CD8-positive, alpha-beta T cell (primary cell): ENCODE measurements at regions of chr16 and their contacts with region 1.

Region 1: GRCh38 chr16:67159593-67160406 is at the starts of genes FBXL8 and TRADD:
- DNase-seq: peak; percentile 53 to 90 (median 76)
- ATAC-seq: peak; percentile 69
- H3K4me3 ChIP-seq: peak within 1 kb of the TSS; percentile 94 to 97
- H3K4me3 Mint-ChIP-seq: peak within 1 kb of the TSS; percentile 89
- H3K27ac ChIP-seq: peak within 1 kb of the TSS; percentile 74 to 93
- H3K27ac Mint-ChIP-seq: peak within 1 kb of the TSS; percentile 95
- H3K4me1 ChIP-seq: peaks cover 72% of the 10 kb centered on the region
- H3K4me1 Mint-ChIP-seq: peaks cover 60% of the 10 kb centered on the region
- H3K27me3 ChIP-seq: peaks cover 13 to 33% of the 10 kb centered on the region in 2 experiments
- H3K27me3 Mint-ChIP-seq: peaks cover 20% of the 10 kb centered on the region
- CTCF ChIP-seq: peak; percentile 60
- total RNA-seq, gene FBXL8: 4.4 to 6.4 TPM
- total RNA-seq, gene TRADD: 15.5 to 17.1 TPM

Region 2: DNA sequence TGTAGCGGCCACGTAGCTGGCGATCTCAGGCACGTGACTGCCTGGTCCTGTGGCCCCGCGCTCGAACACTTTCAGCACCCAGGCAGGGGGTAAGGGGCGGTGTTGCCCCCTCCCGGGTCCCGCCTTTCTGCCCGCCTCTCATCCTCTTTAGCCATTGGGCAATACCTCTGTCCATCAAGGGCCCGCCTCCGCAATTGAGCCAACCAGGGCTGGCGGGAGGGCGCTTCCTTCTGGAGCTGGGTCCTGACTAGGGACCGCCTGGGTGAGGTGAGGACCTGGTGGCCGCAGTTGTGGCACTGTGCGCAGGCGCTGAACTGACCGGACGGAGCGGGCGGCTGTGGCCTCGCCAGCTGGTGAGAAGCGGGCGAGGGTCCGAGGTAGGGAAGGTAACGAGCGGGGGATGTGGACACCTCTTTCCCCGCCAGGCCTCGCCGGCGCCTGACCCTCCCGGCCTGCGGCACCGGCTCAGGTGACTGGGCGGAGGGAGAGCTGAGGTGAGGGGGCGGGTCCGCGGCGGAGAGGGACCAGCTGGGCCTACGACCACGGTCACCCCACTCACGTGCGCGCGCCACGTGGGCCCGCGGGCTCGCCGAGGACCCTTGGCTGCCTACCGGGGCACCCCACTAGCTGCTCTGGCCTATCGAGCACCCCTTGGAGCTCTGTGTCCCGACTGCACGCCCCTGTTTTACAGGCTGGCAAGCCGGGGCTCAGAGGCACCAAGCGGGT is 279.3 kb before region 1 on chr16 and contains the start of gene PDP2:
- CTCF ChIA-PET with region 1: no interaction called
- POLR2A ChIA-PET with region 1: no interaction called
- intact Hi-C with region 1: loop called in 1 of 2 experiments (anchors 1 kb)
- DNase-seq: peak; percentile 75 to 95 (median 89)
- ATAC-seq: peak; percentile 97
- H3K4me3 ChIP-seq: peak within 1 kb of the TSS; percentile 81 to 95
- H3K4me3 Mint-ChIP-seq: peak within 1 kb of the TSS; percentile 99
- H3K27ac ChIP-seq: peak within 1 kb of the TSS; percentile 47 to 54
- H3K27ac Mint-ChIP-seq: peak within 1 kb of the TSS; percentile 94
- H3K4me1 ChIP-seq: peaks cover 7% of the 10 kb centered on the region
- H3K4me1 Mint-ChIP-seq: peaks cover 27% of the 10 kb centered on the region
- H3K27me3 ChIP-seq: no peaks in the 10 kb centered on the region
- H3K27me3 Mint-ChIP-seq: no peaks in the 10 kb centered on the region
- CTCF ChIP-seq: no peak
- total RNA-seq, gene PDP2: 5.1 to 6.1 TPM

Region 3: GRCh38 chr16:66977341-66978113 is 182.3 kb before region 1 on chr16:
- CTCF ChIA-PET with region 1: interaction called, 79 read pairs
- POLR2A ChIA-PET with region 1: interaction called, 3 read pairs
- intact Hi-C with region 1: loop called (anchors 1 kb)
- DNase-seq: peak; percentile 71 to 95 (median 88)
- ATAC-seq: peak; percentile 99
- H3K4me3 ChIP-seq: no peak overlapping the region
- H3K4me3 Mint-ChIP-seq: no peak overlapping the region
- H3K27ac ChIP-seq: no peak overlapping the region
- H3K27ac Mint-ChIP-seq: no peak overlapping the region
- H3K4me1 ChIP-seq: no peaks in the 10 kb centered on the region
- H3K4me1 Mint-ChIP-seq: peaks cover 11% of the 10 kb centered on the region
- H3K27me3 ChIP-seq: no peaks in the 10 kb centered on the region
- H3K27me3 Mint-ChIP-seq: no peaks in the 10 kb centered on the region
- CTCF ChIP-seq: peak; percentile 92

Region 4: GRCh38 chr16:67028555-67029248 is 131.1 kb before region 1 on chr16 and contains the start of gene CBFB:
- CTCF ChIA-PET with region 1: interaction called, 7 read pairs
- POLR2A ChIA-PET with region 1: interaction called, 4 read pairs
- intact Hi-C with region 1: loop called in 1 of 2 experiments (anchors 1 kb)
- DNase-seq: peak; percentile 88 to 98 (median 93)
- ATAC-seq: peak; percentile 83
- H3K4me3 ChIP-seq: peak within 1 kb of the TSS; percentile 74 to 98
- H3K4me3 Mint-ChIP-seq: peak within 1 kb of the TSS; percentile 90
- H3K27ac ChIP-seq: peak within 1 kb of the TSS; percentile 97
- H3K27ac Mint-ChIP-seq: peak within 1 kb of the TSS; percentile 96
- H3K4me1 ChIP-seq: peaks cover 41% of the 10 kb centered on the region
- H3K4me1 Mint-ChIP-seq: peaks cover 42% of the 10 kb centered on the region
- H3K27me3 ChIP-seq: no peaks in the 10 kb centered on the region
- H3K27me3 Mint-ChIP-seq: no peaks in the 10 kb centered on the region
- CTCF ChIP-seq: no peak
- total RNA-seq, gene CBFB: 52.3 to 58.6 TPM

Region 5: DNA sequence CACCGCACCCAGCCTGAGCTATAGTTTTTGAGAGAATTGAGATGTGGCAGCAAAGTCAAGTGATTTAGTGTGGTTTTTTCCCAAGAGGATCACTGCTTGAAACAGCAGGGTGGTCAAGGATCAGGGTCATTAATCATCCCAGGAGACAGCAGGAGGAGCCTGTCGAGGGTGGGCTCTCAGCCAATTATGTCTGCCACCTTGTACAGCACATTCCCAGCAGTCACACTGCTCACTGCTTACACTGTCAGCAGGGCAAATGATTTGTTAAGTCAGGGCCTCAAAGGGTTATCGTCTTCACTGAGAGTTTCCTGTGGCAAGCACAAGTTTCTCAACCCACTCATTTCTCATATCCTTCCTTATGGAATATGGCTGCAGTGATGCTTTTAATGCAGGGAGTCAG is 22.2 kb before region 1 on chr16:
- CTCF ChIA-PET with region 1: interaction called, 15 read pairs
- POLR2A ChIA-PET with region 1: no interaction called
- intact Hi-C with region 1: no loop called
- DNase-seq: no peak
- ATAC-seq: no peak
- H3K4me3 ChIP-seq: no peak overlapping the region
- H3K4me3 Mint-ChIP-seq: no peak overlapping the region
- H3K27ac ChIP-seq: no peak overlapping the region
- H3K27ac Mint-ChIP-seq: no peak overlapping the region
- H3K4me1 ChIP-seq: no peaks in the 10 kb centered on the region
- H3K4me1 Mint-ChIP-seq: no peaks in the 10 kb centered on the region
- H3K27me3 ChIP-seq: no peaks in the 10 kb centered on the region
- H3K27me3 Mint-ChIP-seq: no peaks in the 10 kb centered on the region
- CTCF ChIP-seq: no peak

Region 6: DNA sequence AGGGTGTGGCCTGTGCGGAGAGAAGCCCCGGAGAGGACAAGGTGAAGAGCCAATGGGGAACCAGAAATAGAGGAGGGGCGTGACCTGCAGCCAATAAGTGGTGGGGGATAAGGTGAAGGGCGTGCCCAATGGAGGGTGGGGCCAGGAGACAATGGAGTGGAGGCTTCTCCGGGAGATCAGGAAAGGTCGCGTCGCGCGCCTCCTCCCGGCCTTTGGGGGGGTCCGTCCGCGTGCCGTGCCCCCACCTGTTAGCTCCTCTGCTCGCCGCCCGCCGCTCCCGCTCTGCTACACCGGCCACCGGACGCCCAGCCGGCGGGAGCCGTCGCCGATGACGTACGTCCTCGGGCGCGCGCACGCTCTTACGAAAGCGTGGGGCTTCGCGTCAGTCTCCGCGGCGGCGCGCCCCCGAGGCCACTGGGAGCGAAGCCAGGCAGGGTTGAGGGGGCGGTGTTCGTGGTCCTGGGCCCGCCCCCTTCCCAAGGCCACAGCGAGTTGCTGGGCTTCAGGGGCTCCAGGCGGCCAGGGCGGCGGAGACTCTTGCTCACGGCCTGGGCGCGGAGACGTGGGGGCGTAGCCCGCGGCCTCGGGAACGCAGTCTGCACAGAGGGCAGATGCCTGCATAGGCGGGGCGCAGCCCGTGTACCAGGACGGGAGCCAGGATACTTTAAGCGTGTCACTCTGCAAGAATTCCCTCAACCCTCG is 24.0 kb after region 1 on chr16 and contains the start of gene MATCAP1:
- CTCF ChIA-PET with region 1: interaction called, 20 read pairs
- POLR2A ChIA-PET with region 1: interaction called, 9 read pairs
- intact Hi-C with region 1: loop called (anchors 1 kb)
- DNase-seq: peak; percentile 84 to 98 (median 92)
- ATAC-seq: peak; percentile 96
- H3K4me3 ChIP-seq: peak within 1 kb of the TSS; percentile 65 to 76
- H3K4me3 Mint-ChIP-seq: no peak within 1 kb of the TSS
- H3K27ac ChIP-seq: peak within 1 kb of the TSS; percentile 84 to 95
- H3K27ac Mint-ChIP-seq: no peak within 1 kb of the TSS
- H3K4me1 ChIP-seq: peaks cover 20% of the 10 kb centered on the region
- H3K4me1 Mint-ChIP-seq: peaks cover 17% of the 10 kb centered on the region
- H3K27me3 ChIP-seq: peaks cover 0 to 2% of the 10 kb centered on the region in 2 experiments
- H3K27me3 Mint-ChIP-seq: peaks cover 10% of the 10 kb centered on the region
- CTCF ChIP-seq: no peak
- total RNA-seq, gene MATCAP1: 7.7 to 8.0 TPM